ENCODE measurements at regions of chr2 and their contacts with region 1.

Region 1: DNA sequence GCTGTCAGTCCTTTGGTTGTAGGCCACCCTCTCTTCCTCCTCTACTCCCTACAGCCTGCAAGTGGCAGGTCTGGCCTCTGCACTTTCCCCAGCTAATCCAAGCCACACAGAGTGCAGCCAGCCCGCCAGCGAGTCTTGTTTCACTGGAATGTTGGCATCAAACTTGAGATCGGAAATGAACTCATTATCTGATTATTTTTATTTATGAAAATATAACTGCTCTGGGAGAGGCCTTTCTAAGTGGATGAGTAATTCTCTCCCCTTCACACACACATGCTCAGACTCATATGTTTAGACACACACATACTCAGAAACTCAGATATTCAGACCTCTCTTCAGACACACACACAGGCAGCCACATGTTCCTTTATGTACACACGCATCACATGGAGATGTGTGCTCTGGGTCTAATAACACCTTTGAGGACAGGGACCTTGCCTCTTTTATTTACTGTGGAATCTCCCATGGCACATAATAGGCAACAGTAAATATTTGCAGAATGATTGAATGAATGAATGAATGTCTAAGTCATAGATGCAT is 151.3 kb downstream of the ZFP36L2 start:
- DNase-seq: peak; percentile 81 to 88 (median 86)
- ATAC-seq: peak; percentile 59 to 81 (median 80)
- H3K4me3 ChIP-seq: no peak overlapping the region
- H3K27ac ChIP-seq: peak overlapping the region; percentile 58 to 93 (median 76)
- H3K4me1 ChIP-seq: peaks cover 12 to 76% (median 56%) of the 10 kb centered on the region in 12 donors
- H3K27me3 ChIP-seq: no peaks in the 10 kb centered on the region
- CTCF ChIP-seq: peak in 3 of 12 donors; percentile 16 to 21 (median 20)
- POLR2A ChIP-seq: no peak

Region 2: DNA sequence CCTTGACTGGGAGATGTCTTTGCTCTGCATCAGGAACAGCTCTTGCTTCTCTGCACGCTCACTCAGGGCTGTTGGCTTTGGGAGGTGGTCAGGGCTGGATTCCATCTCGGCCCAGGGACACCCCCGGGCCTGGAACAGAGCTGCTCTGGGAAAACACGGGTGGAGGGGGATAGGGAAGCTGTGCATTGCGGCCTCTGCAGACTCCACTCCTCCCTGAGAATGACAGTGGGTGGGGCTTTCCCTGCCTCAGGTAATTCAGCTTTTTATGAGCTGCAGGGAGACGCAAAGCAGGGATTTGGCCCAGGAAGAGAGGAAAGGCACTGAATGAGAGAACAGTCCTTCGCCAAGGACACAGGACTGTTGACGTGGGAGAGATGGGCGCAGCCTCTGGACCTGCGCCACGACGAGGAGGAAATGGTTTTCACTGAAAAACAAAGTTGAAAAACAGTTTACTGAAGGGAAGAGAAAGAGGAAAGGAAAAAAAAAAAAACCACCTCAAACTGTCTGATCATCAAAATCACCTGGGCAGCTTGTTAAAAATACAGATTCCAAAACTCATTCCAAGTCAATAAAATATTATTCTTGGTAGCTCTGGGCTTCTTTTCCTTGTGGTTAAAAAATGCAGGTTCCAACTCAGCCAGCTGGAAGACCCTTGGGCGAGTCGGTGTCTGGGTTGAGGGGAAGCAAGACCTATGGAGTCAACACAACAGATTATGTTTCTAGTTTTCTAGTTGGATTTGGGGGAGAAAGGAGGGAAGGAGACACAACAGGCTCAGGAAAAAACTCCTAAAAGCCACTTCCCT is 42.7 kb before region 1 on chr2:
- intact Hi-C with region 1: loop called in 4 of 10 experiments (anchors 5 kb)
- DNase-seq: peak; percentile 65 to 77 (median 67)
- ATAC-seq: peak; percentile 63 to 91 (median 82)
- H3K4me3 ChIP-seq: no peak overlapping the region
- H3K27ac ChIP-seq: peak overlapping the region; percentile 15 to 87 (median 64)
- H3K4me1 ChIP-seq: peaks cover 0 to 36% (median 22%) of the 10 kb centered on the region in 12 donors
- H3K27me3 ChIP-seq: no peaks in the 10 kb centered on the region
- CTCF ChIP-seq: no peak
- POLR2A ChIP-seq: no peak

Region 3: GRCh38 chr2:43105586-43106558 is 30.7 kb after region 1 on chr2:
- intact Hi-C with region 1: loop called in 1 of 10 experiments (anchors 5 kb)
- DNase-seq: peak; percentile 65 to 83 (median 69)
- ATAC-seq: peak; percentile 33 to 64 (median 56)
- H3K4me3 ChIP-seq: no peak overlapping the region
- H3K27ac ChIP-seq: peak overlapping the region; percentile 38 to 90 (median 72)
- H3K4me1 ChIP-seq: peaks cover 0 to 91% (median 41%) of the 10 kb centered on the region in 12 donors
- H3K27me3 ChIP-seq: no peaks in the 10 kb centered on the region
- CTCF ChIP-seq: peak in 8 of 12 donors; percentile 8 to 44 (median 29)
- POLR2A ChIP-seq: no peak

Region 4: GRCh38 chr2:43115881-43116280 is 40.8 kb after region 1 on chr2:
- intact Hi-C with region 1: loop called in 2 of 10 experiments (anchors 5 kb)
- DNase-seq: no peak
- ATAC-seq: no peak
- H3K4me3 ChIP-seq: no peak overlapping the region
- H3K27ac ChIP-seq: no peak overlapping the region
- H3K4me1 ChIP-seq: peaks cover 0 to 27% (median 12%) of the 10 kb centered on the region in 12 donors
- H3K27me3 ChIP-seq: no peaks in the 10 kb centered on the region
- CTCF ChIP-seq: no peak
- POLR2A ChIP-seq: no peak

Region 5: GRCh38 chr2:43239981-43240761 is 165.0 kb after region 1 on chr2:
- intact Hi-C with region 1: no loop called
- DNase-seq: no peak
- ATAC-seq: peak; percentile 7 to 58 (median 28)
- H3K4me3 ChIP-seq: no peak overlapping the region
- H3K27ac ChIP-seq: peak overlapping the region in 7 of 12 donors; percentile 27 to 95 (median 54)
- H3K4me1 ChIP-seq: peaks cover 0 to 62% (median 1%) of the 10 kb centered on the region in 12 donors
- H3K27me3 ChIP-seq: no peaks in the 10 kb centered on the region
- CTCF ChIP-seq: peak in 3 of 12 donors; percentile 5 to 23 (median 6)
- POLR2A ChIP-seq: no peak

Measured in heart left ventricle (tissue), 16 donors.